ENCODE measurements at regions of chr9 and their contacts with region 1.

Region 1: GRCh38 chr9:137280474-137281344 is 3.2 kb downstream of the TOR4A start:
- DNase-seq: no peak
- H3K4me3 ChIP-seq: peak overlapping the region in 1 of 3 experiments; percentile 27
- H3K27ac ChIP-seq: no peak overlapping the region
- H3K4me1 ChIP-seq: peaks cover 13% of the 10 kb centered on the region
- H3K27me3 ChIP-seq: peaks cover 5% of the 10 kb centered on the region
- CTCF ChIP-seq: peak; percentile 10 to 48

Region 2: GRCh38 chr9:137243626-137244485 is 36.9 kb before region 1 on chr9:
- CTCF ChIA-PET with region 1: no interaction called
- dilution Hi-C with region 1: loop called (anchors 5 kb)
- in situ Hi-C with region 1: no loop called
- intact Hi-C with region 1: no loop called
- DNase-seq: no peak
- H3K4me3 ChIP-seq: no peak overlapping the region
- H3K27ac ChIP-seq: no peak overlapping the region
- H3K4me1 ChIP-seq: peaks cover 18% of the 10 kb centered on the region
- H3K27me3 ChIP-seq: no peaks in the 10 kb centered on the region
- CTCF ChIP-seq: no peak

Region 3: GRCh38 chr9:137417161-137418021 is 136.7 kb after region 1 on chr9:
- CTCF ChIA-PET with region 1: no interaction called
- dilution Hi-C with region 1: loop called (anchors 5 kb)
- in situ Hi-C with region 1: no loop called
- intact Hi-C with region 1: no loop called
- DNase-seq: no peak
- H3K4me3 ChIP-seq: peak overlapping the region in 2 of 3 experiments; percentile 6 to 10
- H3K27ac ChIP-seq: no peak overlapping the region
- H3K4me1 ChIP-seq: peaks cover 12% of the 10 kb centered on the region
- H3K27me3 ChIP-seq: no peaks in the 10 kb centered on the region
- CTCF ChIP-seq: no peak